ENCODE measurements at regions of chr22 and their contacts with region 1.

Region 1: DNA sequence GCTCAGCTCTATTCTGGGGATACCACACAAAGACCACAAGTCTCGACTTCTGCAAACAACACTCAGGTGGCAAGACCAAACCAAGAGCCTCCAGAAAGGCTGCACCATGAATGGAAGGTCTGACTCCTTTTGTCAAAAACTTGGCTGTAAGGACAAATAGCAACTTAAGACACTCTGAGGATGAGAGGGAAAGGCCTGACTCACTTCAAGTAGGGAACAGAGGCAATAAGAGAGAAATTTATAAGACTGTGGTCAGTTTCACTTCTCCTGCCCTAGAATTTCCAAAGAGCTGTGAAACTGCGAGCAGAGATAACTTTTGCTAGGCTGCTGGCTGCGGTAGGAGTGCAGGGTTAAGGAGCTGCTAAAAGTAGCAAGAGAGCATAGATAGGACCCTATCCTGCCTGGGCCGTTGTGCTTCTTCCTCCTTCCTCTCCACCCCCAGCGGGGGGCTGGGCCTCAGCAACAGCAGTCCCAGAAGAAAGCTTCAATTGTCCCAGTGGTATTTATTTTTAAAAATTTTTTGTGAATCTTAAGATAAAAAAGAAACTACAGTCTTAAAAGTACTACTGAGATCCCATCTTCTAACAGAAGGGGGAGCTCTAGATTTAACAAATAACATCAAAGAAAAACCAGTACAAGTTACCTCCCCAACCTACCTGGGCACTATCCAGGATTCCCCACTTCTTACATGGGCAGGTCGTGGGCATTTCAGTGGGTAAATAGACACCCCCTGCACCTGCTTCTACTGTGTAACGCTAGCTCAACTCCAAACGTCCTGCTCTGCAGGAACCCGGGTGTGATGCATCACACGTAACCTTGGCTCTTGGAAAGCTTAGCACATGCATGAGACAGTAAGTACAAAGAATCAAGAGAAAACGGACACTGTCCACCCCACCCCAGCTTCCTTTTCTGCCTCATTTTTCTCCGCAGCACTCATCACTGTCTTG is 66.4 kb downstream of the SGSM3 start:
- DNase-seq: peak; percentile 53
- CTCF ChIP-seq: peak; percentile 35

Region 2: DNA sequence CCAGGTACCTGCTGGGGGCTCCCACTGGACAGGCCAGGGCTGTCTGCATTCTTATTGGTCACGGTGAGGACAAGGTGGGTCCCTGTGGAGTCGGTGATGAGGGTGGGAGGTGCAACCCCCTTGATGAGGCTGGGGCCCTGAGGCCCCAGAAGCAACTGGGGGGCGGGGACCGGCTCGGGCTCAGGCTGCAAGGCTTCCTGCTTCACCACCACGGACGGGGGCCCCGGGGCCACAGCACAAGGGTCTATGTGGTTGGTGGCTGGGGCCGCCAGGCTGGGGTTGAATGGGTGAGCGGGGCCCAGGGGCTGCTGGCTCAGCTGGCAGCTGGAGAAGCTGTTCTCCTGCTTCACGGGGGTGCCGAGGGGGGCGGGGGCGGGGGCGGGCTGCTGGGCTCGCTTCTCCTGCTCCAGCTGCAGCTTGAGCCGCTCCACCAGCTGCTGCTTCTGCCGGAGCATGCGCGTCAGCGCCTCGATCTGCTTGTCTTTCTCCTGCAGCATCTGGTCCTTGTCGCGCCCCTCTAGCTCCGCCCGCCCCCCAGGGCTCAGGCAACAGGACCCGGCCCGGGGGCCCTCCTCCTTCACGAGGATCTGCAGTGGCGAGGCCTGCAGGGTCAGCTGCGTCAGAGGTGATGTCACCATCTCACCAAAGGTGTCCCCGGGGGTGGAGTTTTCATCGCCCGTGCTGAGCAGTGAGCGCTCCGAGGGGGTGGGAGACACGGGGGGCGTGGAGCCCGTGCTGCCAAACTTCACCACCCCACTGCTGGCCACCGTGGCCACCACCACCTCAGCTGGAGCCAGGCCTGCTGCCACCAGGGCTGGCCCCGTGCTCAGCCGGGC is 18.2 kb before region 1 on chr22:
- CTCF ChIA-PET with region 1: interaction called, 49 read pairs
- POLR2A ChIA-PET with region 1: interaction called, 4 read pairs
- DNase-seq: no peak
- CTCF ChIP-seq: no peak

Region 3: GRCh38 chr22:40463017-40463631 is 26.3 kb after region 1 on chr22:
- CTCF ChIA-PET with region 1: interaction called, 95 read pairs
- POLR2A ChIA-PET with region 1: no interaction called
- DNase-seq: peak; percentile 61
- CTCF ChIP-seq: no peak

Region 4: GRCh38 chr22:40504285-40505249 is 67.8 kb after region 1 on chr22:
- CTCF ChIA-PET with region 1: interaction called, 11 read pairs
- POLR2A ChIA-PET with region 1: no interaction called
- DNase-seq: peak; percentile 29
- CTCF ChIP-seq: no peak

Region 5: DNA sequence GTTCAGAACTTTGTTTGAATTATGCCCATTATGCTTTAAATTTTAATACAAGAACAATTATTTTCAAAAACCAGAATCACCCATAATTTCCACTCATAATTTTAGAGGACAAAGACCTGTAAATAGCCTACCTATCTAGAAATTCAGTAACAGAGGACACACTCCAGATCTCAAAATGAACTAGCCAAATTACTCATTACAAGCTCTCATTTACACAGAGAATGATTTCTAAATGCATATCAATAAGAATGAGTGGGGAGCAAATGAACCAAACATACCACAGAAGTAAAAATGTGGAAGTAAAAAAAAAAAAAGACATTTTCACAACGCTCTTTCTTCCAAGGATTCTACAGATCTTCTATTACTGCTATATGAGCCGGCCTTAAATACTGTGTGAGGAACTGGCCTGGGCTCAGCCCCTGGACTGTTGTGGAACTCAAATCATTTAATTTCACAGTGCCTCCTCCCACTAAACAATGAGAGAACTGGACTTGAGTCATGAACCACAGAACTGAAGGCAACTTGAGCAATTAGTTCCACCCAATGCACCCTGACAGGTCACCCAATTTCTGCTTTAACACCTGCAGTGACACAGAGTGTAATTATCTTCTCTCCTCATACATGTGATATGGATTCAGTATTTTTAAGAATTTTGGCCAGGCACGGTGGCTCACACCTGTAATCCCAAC is 191.7 kb after region 1 on chr22:
- CTCF ChIA-PET with region 1: interaction called, 29 read pairs
- POLR2A ChIA-PET with region 1: no interaction called
- DNase-seq: peak; percentile 39
- CTCF ChIP-seq: no peak

Region 6: GRCh38 chr22:40651563-40652501 is 215.1 kb after region 1 on chr22:
- CTCF ChIA-PET with region 1: interaction called, 78 read pairs
- POLR2A ChIA-PET with region 1: no interaction called
- DNase-seq: peak; percentile 84
- CTCF ChIP-seq: no peak